ENCODE measurements at regions of chr15 and their contacts with region 1.

Region 1: GRCh38 chr15:66851226-66852071 is 149.4 kb downstream of the SMAD6 start:
- DNase-seq: no peak
- H3K4me3 ChIP-seq: no peak overlapping the region
- CTCF ChIP-seq: peak; percentile 98

Region 2: DNA sequence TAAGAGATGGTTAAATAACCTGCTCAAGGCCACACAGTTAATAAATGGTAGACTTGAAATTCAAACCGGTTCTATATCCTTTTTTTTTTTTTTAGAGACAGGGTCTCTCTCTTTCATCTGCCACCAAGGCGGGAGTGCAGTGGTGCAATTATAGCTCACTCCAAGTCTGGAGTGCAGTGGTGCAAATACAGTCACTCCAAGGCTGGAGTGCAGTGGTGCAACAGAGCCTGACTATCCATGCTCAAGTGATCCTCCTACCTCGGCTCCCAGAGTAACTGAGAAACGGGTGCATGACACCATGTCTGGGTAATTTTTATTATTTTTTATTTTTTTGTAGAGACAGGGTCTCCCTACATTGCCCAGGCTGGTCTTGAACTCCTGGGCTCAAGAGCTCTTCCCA is 1357.4 kb before region 1 on chr15:
- CTCF ChIA-PET with region 1: no interaction called
- POLR2A ChIA-PET with region 1: no interaction called
- DNase-seq: no peak
- H3K4me3 ChIP-seq: no peak overlapping the region
- CTCF ChIP-seq: no peak

Region 3: DNA sequence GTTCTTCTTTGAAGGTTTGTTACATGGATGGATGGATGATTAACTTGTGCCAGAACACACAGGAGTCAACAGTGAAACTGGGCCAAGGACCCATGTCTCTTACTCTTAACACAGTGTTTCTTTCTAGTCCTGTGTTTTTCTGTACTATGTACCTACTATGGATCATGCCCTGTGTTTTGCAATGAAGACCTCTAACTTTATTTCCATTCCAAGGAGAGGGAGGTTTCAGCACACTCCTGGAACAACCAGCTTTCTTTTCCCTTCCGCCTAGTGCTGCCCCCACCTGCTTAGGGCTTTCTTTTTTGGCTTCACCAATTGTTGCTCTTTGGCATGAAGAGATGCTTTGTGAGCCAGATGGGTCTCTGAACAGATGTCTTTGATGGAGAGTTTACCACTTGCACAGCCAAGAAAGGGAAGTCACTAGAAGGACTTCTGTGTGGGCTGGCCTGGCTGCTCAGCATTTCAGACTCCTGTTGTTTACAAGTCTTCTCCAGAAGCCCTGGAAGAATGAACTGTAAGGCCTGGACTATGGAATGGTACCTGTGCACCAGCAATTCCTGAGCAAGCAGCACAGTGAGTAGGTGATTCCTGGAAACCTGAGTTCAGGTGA is 398.4 kb before region 1 on chr15:
- CTCF ChIA-PET with region 1: no interaction called
- POLR2A ChIA-PET with region 1: no interaction called
- DNase-seq: no peak
- H3K4me3 ChIP-seq: no peak overlapping the region
- CTCF ChIP-seq: no peak

Region 4: DNA sequence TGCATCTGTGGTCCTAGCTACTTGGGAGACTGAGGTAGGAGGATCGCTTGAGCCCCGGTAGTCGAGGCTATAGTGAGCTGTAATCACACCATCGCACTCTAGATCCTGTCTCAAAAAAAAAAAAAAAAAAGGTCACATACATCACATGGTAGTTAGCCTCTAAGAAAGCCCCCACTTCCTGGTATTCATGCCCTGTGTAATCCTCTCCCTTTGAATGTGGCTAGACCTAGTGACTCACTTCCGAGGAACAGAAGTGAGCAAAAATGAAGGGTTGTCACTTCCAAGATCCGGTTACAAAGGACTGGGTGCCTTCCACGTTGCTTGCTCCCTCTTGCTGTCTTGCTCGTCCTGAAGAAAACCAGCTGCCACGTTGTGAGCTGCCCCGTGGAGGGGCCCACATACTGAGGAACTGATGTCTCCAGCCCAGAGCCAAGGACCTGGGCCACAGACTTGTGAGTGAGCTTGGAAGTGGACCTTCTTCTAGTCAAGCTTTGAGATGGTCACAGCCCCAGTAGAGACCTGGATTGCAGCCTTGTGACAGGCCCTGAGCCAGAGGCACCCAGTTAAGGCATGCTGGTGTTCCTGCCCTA is 273.1 kb before region 1 on chr15:
- CTCF ChIA-PET with region 1: interaction called, 11 read pairs
- POLR2A ChIA-PET with region 1: no interaction called
- DNase-seq: no peak
- H3K4me3 ChIP-seq: no peak overlapping the region
- CTCF ChIP-seq: no peak

Region 5: DNA sequence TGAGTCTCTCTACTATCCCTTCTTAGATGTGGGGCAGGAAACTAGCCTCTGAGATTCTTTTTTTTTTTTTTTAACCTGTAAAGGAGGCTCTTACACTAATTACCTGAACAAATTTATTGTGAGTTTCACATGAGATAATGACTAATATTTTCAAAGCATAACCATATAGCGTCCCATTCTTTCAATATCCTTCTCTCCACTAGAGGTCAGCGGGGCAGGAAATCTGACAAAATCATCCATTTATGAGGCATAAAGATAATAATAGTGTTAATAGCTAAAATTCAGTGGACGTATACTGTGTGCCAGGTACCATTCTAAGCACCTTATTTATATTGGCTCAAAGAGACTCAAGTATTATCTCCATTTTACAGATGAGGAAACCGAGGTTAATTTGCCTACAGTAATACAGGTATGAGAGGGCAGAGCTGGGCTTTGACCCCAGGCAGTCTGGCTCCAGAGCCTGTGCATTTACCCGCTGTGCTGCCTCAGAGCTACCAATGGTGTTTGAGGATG is 165.8 kb before region 1 on chr15:
- CTCF ChIA-PET with region 1: interaction called, 10 read pairs
- POLR2A ChIA-PET with region 1: no interaction called
- DNase-seq: no peak
- H3K4me3 ChIP-seq: no peak overlapping the region
- CTCF ChIP-seq: no peak

Region 6: GRCh38 chr15:66744610-66745545 is 106.6 kb before region 1 on chr15:
- CTCF ChIA-PET with region 1: interaction called, 12 read pairs
- POLR2A ChIA-PET with region 1: no interaction called
- DNase-seq: no peak
- H3K4me3 ChIP-seq: no peak overlapping the region
- CTCF ChIP-seq: peak; percentile 2

Region 7: GRCh38 chr15:66798426-66799061 is 52.9 kb before region 1 on chr15:
- CTCF ChIA-PET with region 1: interaction called, 14 read pairs
- POLR2A ChIA-PET with region 1: interaction called, 3 read pairs
- DNase-seq: no peak
- H3K4me3 ChIP-seq: no peak overlapping the region
- CTCF ChIP-seq: no peak

Region 8: GRCh38 chr15:66835321-66835878 is 16.0 kb before region 1 on chr15:
- CTCF ChIA-PET with region 1: interaction called, 67 read pairs
- POLR2A ChIA-PET with region 1: interaction called, 3 read pairs
- DNase-seq: no peak
- H3K4me3 ChIP-seq: no peak overlapping the region
- CTCF ChIP-seq: no peak

Region 9: GRCh38 chr15:66882251-66883020 is 31.0 kb after region 1 on chr15:
- CTCF ChIA-PET with region 1: interaction called, 12 read pairs
- POLR2A ChIA-PET with region 1: no interaction called
- DNase-seq: no peak
- H3K4me3 ChIP-seq: no peak overlapping the region
- CTCF ChIP-seq: no peak